ENCODE measurements at regions of chr2 and their contacts with region 1.

Region 1: GRCh38 chr2:43219383-43220228 is 6.8 kb downstream of the ZFP36L2 start:
- DNase-seq: no peak
- H3K4me3 ChIP-seq: peak overlapping the region; percentile 87
- H3K27ac ChIP-seq: peak overlapping the region; percentile 96
- H3K27me3 ChIP-seq: no peaks in the 10 kb centered on the region
- CTCF ChIP-seq: no peak

Region 2: GRCh38 chr2:42828487-42829425 is 390.9 kb before region 1 on chr2:
- CTCF ChIA-PET with region 1: interaction called, 13 read pairs
- POLR2A ChIA-PET with region 1: no interaction called
- DNase-seq: no peak
- H3K4me3 ChIP-seq: no peak overlapping the region
- H3K27ac ChIP-seq: no peak overlapping the region
- H3K27me3 ChIP-seq: no peaks in the 10 kb centered on the region
- CTCF ChIP-seq: peak; percentile 87

Region 3: DNA sequence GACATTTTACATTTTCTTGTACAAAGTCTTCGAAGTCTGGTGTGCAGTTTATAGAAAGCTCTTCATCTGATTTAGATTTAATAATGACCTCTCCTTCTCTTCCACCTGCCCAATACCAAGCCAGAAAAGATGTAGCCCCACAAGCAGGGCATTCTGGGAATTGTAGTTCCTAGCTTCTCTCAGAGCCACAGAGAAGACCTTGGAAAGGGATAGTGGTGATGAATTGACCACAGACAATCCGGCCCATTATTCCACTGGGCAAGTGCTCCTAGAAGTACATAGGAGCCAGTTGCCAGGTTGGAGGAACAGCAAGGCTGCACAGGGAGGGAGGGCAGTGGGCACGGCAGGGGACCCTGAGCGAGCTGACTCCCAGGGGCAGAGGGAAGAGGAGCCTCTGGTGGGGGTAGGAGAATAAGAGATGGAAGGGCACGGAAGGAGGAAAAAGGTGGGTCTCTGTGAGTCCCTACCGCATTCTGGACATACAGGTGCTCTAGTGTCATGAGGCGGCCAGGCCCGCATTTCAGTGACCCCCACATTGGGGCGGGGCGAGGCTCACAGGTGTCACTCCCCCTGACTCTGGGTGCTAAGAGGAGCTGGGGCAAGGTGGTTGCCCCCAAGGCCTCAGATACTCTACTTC is 274.7 kb before region 1 on chr2:
- CTCF ChIA-PET with region 1: interaction called, 24 read pairs
- POLR2A ChIA-PET with region 1: interaction called, 8 read pairs
- DNase-seq: no peak
- H3K4me3 ChIP-seq: no peak overlapping the region
- H3K27ac ChIP-seq: no peak overlapping the region
- H3K27me3 ChIP-seq: no peaks in the 10 kb centered on the region
- CTCF ChIP-seq: no peak

Region 4: GRCh38 chr2:42974721-42975717 is 244.6 kb before region 1 on chr2:
- CTCF ChIA-PET with region 1: interaction called, 17 read pairs
- POLR2A ChIA-PET with region 1: interaction called, 12 read pairs
- DNase-seq: no peak
- H3K4me3 ChIP-seq: peak overlapping the region; percentile 47
- H3K27ac ChIP-seq: peak overlapping the region; percentile 47
- H3K27me3 ChIP-seq: no peaks in the 10 kb centered on the region
- CTCF ChIP-seq: peak; percentile 95

Region 5: GRCh38 chr2:43024515-43025011 is 195.0 kb before region 1 on chr2:
- CTCF ChIA-PET with region 1: interaction called, 6 read pairs
- POLR2A ChIA-PET with region 1: interaction called, 10 read pairs
- DNase-seq: no peak
- H3K4me3 ChIP-seq: no peak overlapping the region
- H3K27ac ChIP-seq: no peak overlapping the region
- H3K27me3 ChIP-seq: no peaks in the 10 kb centered on the region
- CTCF ChIP-seq: peak; percentile 94

Region 6: DNA sequence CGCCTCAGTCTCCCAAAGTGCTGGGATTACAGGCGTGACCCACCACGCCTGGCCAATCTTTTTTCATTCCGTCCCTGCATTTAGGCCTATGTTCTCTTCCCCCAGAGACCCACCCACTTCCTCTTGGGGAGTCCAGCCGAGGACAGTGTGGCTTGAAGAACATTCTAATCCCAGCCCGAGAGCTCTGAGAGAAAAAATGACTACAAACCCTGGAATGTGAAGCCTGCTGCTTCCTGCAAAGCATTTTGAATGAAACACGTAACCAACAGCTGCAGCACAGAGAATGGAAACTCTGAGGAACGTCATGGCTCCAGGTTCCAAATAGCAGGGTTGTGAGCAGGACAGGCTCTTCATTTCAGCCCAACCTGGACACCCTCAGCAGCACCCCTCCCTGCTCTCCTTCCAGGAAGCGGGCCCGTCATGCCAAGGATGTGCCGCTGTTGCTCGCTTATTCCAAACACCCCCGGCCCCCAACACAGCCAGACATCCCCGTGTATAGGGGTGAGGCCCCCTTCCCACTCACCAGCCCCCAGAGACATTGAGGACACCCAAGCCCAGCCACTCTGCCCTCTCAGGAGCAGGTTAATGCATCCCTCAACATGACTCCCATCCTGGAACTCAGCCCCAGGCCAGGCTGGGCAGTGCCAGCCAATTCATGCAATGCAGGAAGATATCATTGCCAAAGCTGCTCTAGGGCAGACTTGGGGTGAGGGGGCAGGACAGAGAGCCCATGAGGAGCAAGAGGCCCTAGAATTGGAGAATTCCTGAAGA is 133.0 kb before region 1 on chr2:
- CTCF ChIA-PET with region 1: no interaction called
- POLR2A ChIA-PET with region 1: interaction called, 12 read pairs
- DNase-seq: peak; percentile 98
- H3K4me3 ChIP-seq: no peak overlapping the region
- H3K27ac ChIP-seq: peak overlapping the region; percentile 99
- H3K27me3 ChIP-seq: no peaks in the 10 kb centered on the region
- CTCF ChIP-seq: no peak

Region 7: GRCh38 chr2:44016282-44016681 is 796.7 kb after region 1 on chr2:
- CTCF ChIA-PET with region 1: no interaction called
- POLR2A ChIA-PET with region 1: no interaction called
- DNase-seq: peak; percentile 3
- H3K4me3 ChIP-seq: no peak overlapping the region
- H3K27ac ChIP-seq: no peak overlapping the region
- H3K27me3 ChIP-seq: no peaks in the 10 kb centered on the region
- CTCF ChIP-seq: no peak

Measured in AG04450 (cell line).